Sigmoid colon (tissue), 7 donors: ENCODE measurements at regions of chr11 and their contacts with region 1.

Region 1: GRCh38 chr11:64742889-64743590 is 902 bp downstream of the RASGRP2 start:
- DNase-seq: peak; percentile 92
- H3K4me3 ChIP-seq: peak overlapping the region; percentile 37 to 86 (median 68)
- H3K27ac ChIP-seq: peak overlapping the region; percentile 95 to 98 (median 96)
- H3K4me1 ChIP-seq: peaks cover 0 to 50% (median 45%) of the 10 kb centered on the region in 4 donors
- H3K27me3 ChIP-seq: no peaks in the 10 kb centered on the region
- CTCF ChIP-seq: peak; percentile 45 to 76 (median 62)
- EP300 ChIP-seq: no peak
- POLR2A ChIP-seq: no peak

Region 2: GRCh38 chr11:64764040-64764611 is 21.1 kb after region 1 on chr11:
- intact Hi-C with region 1: loop called (anchors 1 kb)
- DNase-seq: no peak
- H3K4me3 ChIP-seq: no peak overlapping the region
- H3K27ac ChIP-seq: peak overlapping the region; percentile 79 to 88 (median 82)
- H3K4me1 ChIP-seq: peaks cover 0 to 79% (median 71%) of the 10 kb centered on the region in 4 donors
- H3K27me3 ChIP-seq: no peaks in the 10 kb centered on the region
- CTCF ChIP-seq: no peak
- EP300 ChIP-seq: no peak
- POLR2A ChIP-seq: no peak

Region 3: DNA sequence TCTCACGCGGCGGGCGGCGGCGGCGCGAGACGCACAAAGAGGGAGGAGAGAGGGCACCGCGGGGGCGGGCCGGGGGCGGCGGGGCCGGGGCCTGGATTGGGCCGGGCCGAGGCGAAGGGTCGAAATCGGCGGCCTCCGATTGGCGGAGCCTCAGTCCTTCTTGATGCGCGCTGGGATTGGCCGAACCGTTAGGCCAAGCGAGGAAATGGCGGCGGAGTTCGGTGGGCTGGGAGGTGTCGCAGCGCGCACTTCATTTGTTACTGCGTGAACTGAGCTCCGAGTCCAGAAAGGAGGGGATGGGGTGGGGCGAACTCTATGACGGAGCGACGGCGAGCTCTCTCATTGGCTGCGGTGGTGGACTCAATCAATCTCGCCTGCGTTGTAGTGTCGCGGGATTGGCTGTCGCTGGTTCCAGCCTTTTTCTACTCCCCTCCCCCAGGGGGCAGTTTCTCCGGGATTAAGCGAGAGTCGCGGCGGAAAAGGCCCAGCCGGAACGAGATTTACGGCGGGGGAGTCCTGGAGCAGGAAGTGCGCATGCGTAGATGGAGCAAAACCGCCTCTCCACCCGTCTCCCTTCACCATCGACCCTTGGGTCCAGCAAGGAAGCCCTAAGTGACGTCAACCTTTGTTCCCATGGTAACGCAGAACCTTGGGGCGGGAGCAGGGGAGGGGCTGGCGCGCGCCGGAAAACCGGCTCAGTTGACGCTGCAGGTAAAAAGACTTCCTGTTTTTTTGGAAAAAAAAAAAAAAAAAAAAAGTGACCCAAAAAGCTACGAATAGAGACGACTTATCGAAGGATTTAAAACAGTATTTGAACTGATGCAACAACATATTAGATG is 35.7 kb after region 1 on chr11 and contains the start of gene SF1:
- intact Hi-C with region 1: loop called (anchors 2 kb)
- DNase-seq: peak; percentile 100
- H3K4me3 ChIP-seq: peak within 1 kb of the TSS; percentile 96 to 99 (median 98)
- H3K27ac ChIP-seq: peak within 1 kb of the TSS; percentile 99 to 100 (median 100)
- H3K4me1 ChIP-seq: peaks cover 0 to 42% (median 35%) of the 10 kb centered on the region in 4 donors
- H3K27me3 ChIP-seq: no peaks in the 10 kb centered on the region
- CTCF ChIP-seq: no peak
- EP300 ChIP-seq: peak in 1 of 4 donors; percentile 20
- POLR2A ChIP-seq: peak; percentile 60 to 91
- total RNA-seq, gene SF1: 185 to 381 (median 294) TPM

Region 4: DNA sequence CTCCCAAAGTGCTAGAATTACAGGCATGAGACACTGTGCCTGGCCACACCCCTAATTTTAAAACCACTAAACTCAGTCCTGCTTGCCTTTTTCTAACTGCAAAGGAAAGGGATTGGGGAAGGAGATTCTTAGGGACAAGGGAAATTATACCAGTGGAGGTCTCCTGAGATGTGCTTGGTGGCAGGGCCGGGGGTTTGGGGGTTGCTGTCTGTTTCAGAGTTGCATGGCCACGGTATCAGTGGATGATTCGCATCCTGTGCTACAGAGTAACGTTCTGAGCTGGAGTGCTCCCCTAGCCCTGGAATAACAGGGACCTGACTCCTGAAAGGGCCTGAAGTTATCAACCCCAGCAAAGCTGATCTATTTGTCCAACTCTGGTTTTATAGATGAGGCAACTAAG is 193.5 kb after region 1 on chr11:
- intact Hi-C with region 1: no loop called
- DNase-seq: no peak
- H3K4me3 ChIP-seq: no peak overlapping the region
- H3K27ac ChIP-seq: no peak overlapping the region
- H3K4me1 ChIP-seq: peaks cover 0 to 9% (median 0%) of the 10 kb centered on the region in 4 donors
- H3K27me3 ChIP-seq: no peaks in the 10 kb centered on the region
- CTCF ChIP-seq: no peak
- EP300 ChIP-seq: no peak
- POLR2A ChIP-seq: no peak